Astrocyte of the cerebellum (primary cell): ENCODE measurements at regions of chr3 and their contacts with region 1.

Region 1: DNA sequence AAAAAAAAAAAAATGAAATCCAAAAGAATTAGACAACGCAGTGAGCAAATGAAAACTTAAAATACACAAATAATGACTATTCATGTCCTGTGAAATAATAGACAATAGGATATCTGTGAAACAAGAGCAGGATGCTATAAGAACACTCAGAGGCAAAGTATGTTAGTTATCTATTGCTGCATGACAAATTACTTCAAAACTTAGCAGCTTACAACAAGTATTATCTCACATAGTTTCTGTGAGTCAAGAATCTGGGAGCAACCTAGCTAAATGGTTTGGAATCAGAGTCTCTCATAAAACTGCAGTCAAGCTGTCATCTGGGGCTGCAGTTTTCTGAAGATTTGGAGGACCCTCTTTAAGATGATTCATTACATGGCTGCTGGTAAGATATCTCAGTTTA is 36.5 kb upstream of the ZMAT3 start:
- DNase-seq: no peak
- H3K4me3 ChIP-seq: no peak overlapping the region
- CTCF ChIP-seq: no peak

Region 2: GRCh38 chr3:179015551-179016020 is 92.5 kb before region 1 on chr3:
- in situ Hi-C with region 1: loop called (anchors 5 kb)
- DNase-seq: peak; percentile 78
- H3K4me3 ChIP-seq: no peak overlapping the region
- CTCF ChIP-seq: peak; percentile 72

Region 3: DNA sequence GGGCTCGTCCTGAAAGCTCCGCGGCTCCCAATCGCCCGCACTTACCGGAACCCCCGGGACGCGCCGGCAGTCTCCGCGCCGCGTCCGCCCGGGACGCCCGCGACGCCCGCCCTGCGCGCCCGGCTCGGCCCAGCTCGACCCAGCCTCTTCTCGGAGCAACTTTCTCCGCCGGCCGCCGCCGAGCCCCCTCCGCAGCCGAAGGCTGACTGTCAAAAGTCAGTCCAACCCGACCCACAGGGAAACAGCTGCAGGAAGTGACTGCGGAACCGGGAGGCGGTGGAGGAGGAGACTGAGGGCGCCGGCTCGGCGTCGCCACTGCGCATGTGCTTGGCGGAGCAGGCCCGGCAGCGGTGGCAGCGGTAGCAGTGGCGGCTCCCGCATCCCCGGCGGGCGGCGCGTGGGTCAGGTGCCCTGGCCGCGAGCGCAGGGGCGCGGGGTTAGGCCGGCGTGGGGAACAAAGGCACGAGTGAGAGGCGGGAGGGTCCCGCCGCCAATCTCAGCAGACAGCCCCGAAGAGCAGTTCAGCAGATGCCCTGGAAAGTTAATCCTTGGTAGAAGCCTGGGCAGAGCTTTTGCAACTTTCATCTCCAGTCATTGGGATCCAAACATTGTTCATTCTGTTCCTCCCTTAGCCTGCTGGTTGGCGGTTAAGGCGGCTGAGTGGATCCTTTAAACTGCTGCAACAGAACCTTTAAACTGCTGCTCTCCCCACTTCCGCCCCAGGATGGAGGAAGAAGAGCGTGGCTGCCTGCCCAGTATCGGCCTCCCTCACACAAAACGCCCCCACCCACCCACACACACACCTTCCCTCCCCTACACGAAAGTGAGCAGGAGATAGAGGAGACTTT is 36.3 kb before region 1 on chr3 and contains the start of gene ZMAT3:
- in situ Hi-C with region 1: no loop called
- DNase-seq: no peak
- H3K4me3 ChIP-seq: peak within 1 kb of the TSS; percentile 85
- CTCF ChIP-seq: no peak

Region 4: DNA sequence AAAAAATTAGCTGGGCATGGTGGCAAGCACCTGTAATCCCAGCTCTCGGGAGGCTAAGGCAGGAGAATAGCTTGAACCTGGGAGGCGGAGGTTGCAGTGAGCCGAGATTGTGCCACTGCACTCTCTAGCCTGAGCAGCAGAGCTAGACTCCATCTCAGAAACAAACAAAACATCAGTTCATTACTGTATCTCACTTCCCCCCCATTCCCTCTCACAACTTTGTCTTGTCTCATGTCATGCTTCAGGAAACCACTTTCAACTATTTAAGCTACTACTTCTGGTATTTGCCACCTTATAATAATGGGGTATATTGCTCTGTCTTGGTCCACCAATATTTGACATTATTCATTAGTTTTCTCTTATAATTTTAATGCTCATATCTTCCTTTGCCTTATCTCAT is 66.2 kb after region 1 on chr3:
- in situ Hi-C with region 1: no loop called
- DNase-seq: no peak
- H3K4me3 ChIP-seq: no peak overlapping the region
- CTCF ChIP-seq: no peak